CD14-positive monocyte (primary cell): ENCODE measurements at regions of chr20 and their contacts with region 1.

Region 1: DNA sequence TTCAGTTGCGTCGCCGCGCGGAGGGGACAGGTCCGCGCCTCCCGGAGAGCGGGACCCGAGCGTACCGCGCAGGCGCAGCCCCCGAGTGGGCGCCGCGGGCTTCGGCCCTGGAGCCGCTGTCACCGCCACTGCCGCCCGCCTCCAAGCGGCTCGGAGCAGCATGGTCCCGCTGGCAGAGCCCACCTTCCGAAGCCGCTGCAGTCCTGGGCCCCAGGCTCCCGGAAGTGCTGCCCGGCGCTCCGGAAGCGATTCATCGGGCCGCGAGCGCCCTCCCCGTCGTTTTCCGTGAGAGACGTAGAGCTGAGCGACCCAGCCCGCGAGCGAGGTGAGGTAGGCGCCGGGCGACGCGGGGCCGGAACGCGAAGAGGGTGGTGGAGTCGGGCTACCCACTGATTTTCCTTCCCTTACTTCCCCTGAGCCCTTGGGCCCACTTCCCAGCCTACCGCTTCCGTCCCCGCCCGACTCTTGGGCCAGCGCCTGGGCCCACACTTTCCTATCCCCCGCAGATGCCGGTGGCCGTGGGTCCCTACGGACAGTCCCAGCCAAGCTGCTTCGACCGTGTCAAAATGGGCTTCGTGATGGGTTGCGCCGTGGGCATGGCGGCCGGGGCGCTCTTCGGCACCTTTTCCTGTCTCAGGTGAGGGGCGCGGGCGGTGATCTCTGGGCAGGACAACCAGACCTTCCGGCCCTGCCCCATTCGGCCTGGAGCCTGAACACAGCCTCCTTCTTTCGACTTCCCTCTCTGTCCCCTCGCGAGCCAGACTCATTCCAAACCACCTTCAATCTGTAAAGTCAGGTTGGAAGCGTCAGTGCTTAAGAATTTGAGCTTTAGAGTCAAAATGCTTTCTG is at the starts of genes NFS1 and ROMO1:
- DNase-seq: peak; percentile 73 to 81 (median 79)
- H3K4me3 ChIP-seq: peak within 1 kb of the TSS; percentile 69 to 94 (median 90)
- H3K4me3 Mint-ChIP-seq: peak within 1 kb of the TSS; percentile 96 to 99
- H3K27ac ChIP-seq: peak within 1 kb of the TSS; percentile 90 to 91
- H3K27ac Mint-ChIP-seq: peak within 1 kb of the TSS; percentile 92 to 97 (median 95)
- H3K4me1 ChIP-seq: peaks cover 22 to 33% of the 10 kb centered on the region in 2 donors
- H3K4me1 Mint-ChIP-seq: peaks cover 32% of the 10 kb centered on the region
- H3K27me3 ChIP-seq: no peaks in the 10 kb centered on the region
- H3K27me3 Mint-ChIP-seq: peaks cover 0 to 3% (median 1%) of the 10 kb centered on the region in 3 donors
- CTCF ChIP-seq: peak; percentile 19
- polyA plus RNA-seq, gene NFS1: 18.1 to 21.4 (median 19.2) TPM
- polyA plus RNA-seq, gene ROMO1: 220 to 448 (median 352) TPM

Region 2: DNA sequence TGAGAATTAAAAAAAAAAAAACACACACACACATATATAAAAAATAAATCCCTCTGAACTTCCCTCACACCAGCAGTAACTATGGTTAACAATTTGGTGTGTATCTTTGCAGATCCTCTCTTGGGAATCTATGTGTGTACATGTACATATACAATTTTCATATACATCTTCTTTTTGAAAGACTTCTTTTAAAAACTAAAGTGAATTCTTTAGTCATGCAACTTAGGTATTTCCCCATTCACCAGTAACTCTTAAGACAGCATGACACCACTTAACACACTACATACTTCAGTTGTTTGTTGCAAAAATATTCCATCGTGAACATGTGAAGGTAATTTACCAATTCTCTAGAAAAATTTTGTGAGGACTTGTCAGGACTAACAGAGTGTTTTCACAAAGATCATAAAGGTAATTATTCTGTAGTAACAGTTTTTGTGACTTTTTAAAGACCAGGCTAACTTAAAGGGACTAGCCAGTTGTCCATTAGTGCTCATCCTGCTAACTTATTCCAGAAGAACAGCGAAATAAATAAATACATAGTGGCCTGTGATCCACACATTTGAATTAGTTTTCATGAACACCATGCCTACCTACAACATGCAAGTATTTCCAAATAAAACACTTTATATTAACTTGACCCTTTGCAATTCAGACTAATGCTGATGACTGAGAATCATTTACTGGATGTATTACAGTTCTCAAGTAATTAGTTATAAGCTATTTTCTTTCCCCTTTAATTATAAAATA is 30.7 kb after region 1 on chr20:
- intact Hi-C with region 1: loop called (anchors 5 kb)
- DNase-seq: no peak
- H3K4me3 ChIP-seq: no peak overlapping the region
- H3K4me3 Mint-ChIP-seq: no peak overlapping the region
- H3K27ac ChIP-seq: peak overlapping the region in 1 of 2 donors; percentile 32
- H3K27ac Mint-ChIP-seq: peak overlapping the region in 2 of 7 donors; percentile 20 to 32
- H3K4me1 ChIP-seq: no peaks in the 10 kb centered on the region
- H3K4me1 Mint-ChIP-seq: peaks cover 5% of the 10 kb centered on the region
- H3K27me3 ChIP-seq: no peaks in the 10 kb centered on the region
- H3K27me3 Mint-ChIP-seq: peaks cover 0 to 2% (median 0%) of the 10 kb centered on the region in 3 donors
- CTCF ChIP-seq: no peak

Region 3: GRCh38 chr20:35741892-35742740 is 42.8 kb after region 1 on chr20 and contains the start of gene RBM39:
- intact Hi-C with region 1: loop called in 1 of 2 experiments (anchors 5 kb)
- DNase-seq: peak; percentile 100
- H3K4me3 ChIP-seq: peak within 1 kb of the TSS; percentile 78 to 95 (median 91)
- H3K4me3 Mint-ChIP-seq: peak within 1 kb of the TSS; percentile 99 to 100
- H3K27ac ChIP-seq: peak within 1 kb of the TSS; percentile 99 to 100
- H3K27ac Mint-ChIP-seq: peak within 1 kb of the TSS; percentile 97 to 100 (median 100)
- H3K4me1 ChIP-seq: peaks cover 40 to 52% of the 10 kb centered on the region in 2 donors
- H3K4me1 Mint-ChIP-seq: peaks cover 42% of the 10 kb centered on the region
- H3K27me3 ChIP-seq: no peaks in the 10 kb centered on the region
- H3K27me3 Mint-ChIP-seq: no peaks in the 10 kb centered on the region
- CTCF ChIP-seq: no peak
- polyA plus RNA-seq, gene RBM39: 89.5 to 209 (median 98.0) TPM